SK-N-SH (cell line): ENCODE measurements at regions of chr1 and their contacts with region 1.

Region 1: DNA sequence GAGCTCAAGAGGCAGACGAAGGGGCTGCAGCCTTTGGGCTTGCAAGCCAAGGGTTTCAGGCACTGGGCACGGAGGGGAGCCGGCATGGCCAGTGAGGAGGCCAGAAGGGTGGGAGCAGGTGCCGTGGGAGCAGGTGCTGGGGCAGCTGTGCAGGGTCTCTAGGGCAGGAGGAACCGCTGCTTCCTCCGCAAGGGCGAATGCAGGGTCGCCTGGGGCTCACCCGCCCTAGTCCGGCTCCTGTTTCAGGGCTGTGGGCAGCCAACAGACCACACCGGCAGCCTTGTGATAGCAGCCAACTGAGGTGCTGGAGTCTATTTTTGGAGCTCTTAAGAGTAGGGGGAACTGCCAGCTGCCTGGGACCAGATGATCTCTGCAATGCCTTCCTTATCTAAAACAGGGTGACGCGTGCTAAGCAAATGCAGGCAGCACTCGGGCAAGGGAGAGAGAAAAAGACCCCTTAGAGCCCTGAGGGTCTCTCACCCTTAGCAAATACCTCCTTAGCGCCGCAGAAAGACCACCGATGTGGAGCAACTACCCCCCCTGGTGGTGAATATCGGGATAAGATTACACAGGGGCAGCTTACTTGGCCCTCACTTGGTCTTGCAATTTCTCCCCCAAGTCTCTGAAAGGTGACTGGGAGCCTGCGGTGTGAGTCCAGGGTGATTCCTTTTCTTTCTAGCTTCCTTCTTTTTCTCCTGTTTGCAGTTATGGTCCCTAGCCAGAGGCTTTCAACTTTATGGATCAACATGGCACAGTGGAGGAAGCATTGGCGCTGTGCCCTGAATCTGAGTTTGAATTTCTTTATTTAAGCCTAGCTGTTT is 20.7 kb upstream of the MAPKAPK2 start:
- DNase-seq: peak; percentile 84
- H3K4me3 ChIP-seq: peak overlapping the region; percentile 8 to 39; a peak in 2 of 4 replicates
- H3K27ac ChIP-seq: no peak overlapping the region
- H3K4me1 ChIP-seq: peaks cover 0 to 6% of the 10 kb centered on the region in 2 experiments; a peak in 1 of 4 replicates
- H3K27me3 ChIP-seq: peaks cover 23% of the 10 kb centered on the region; the same call in 1 of the 2 replicates
- CTCF ChIP-seq: peak; percentile 89
- EP300 ChIP-seq: no peak
- RAD21 ChIP-seq: peak; percentile 89

Region 2: GRCh38 chr1:206479183-206480125 is 184.6 kb before region 1 on chr1:
- CTCF ChIA-PET with region 1: interaction called, 26 read pairs
- POLR2A ChIA-PET with region 1: no interaction called
- DNase-seq: peak; percentile 89
- H3K4me3 ChIP-seq: no peak overlapping the region
- H3K27ac ChIP-seq: no peak overlapping the region
- H3K4me1 ChIP-seq: peaks cover 12% of the 10 kb centered on the region in 2 experiments; a peak in 3 of 4 replicates
- H3K27me3 ChIP-seq: no peaks in the 10 kb centered on the region
- CTCF ChIP-seq: peak; percentile 80
- EP300 ChIP-seq: no peak
- RAD21 ChIP-seq: peak; percentile 85

Region 3: GRCh38 chr1:206612129-206612876 is 51.7 kb before region 1 on chr1 and contains the start of gene EIF2D:
- CTCF ChIA-PET with region 1: interaction called, 109 read pairs
- POLR2A ChIA-PET with region 1: interaction called, 3 read pairs
- DNase-seq: peak; percentile 100
- H3K4me3 ChIP-seq: peak within 1 kb of the TSS; percentile 81 to 94
- H3K27ac ChIP-seq: peak within 1 kb of the TSS; percentile 83 to 90
- H3K4me1 ChIP-seq: peaks cover 0 to 8% of the 10 kb centered on the region in 2 experiments; a peak in 2 of 4 replicates
- H3K27me3 ChIP-seq: no peaks in the 10 kb centered on the region
- CTCF ChIP-seq: peak; percentile 77
- EP300 ChIP-seq: peak in 1 of 2 experiments; percentile 44; a peak in 1 of 4 replicates
- RAD21 ChIP-seq: no peak
- polyA plus RNA-seq, gene EIF2D: 59.5 and 83.2 TPM in 2 replicates

Region 4: DNA sequence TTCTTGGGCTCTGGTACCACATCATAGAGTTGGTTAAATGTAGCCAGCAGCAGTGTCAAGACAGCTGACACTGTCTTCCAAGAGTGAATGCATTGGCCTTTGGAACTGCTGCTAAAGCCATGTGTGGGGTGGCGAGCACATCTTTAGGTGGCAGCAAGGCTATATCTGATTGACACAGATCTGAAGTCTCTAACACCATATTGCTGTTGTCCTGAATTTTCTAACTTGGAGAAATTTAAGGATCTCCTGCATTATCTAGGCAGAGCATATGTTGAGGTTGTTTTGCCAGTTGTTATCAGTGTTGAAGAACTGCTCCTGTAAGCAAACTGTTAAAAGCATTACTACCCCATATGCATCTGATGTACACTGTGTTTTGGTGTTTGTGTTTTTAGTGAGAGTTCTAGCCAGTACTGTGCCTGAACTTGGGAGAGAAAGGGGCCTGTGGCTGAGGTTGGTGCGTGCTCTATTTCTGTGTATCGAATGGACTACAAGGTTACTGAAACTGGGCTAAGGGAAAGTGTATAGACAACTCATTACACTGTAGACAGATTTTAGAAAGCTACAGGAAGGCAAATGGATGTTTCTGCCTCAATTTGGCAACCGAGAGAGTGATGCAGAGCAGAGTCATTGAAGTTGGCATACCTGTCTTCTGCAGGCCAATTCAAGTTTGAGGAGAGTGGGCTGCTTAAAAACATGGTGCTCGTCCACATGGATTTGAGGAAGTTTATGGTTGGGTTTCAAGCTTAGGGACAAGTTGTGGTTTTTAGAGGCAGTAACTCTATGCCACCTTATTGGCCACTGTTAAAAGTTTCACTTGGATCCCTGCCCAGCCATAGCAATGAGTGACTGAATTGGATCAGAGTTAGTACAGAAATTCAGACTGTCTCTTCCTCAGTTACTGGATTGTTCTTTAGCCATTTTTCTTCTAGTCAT is 11.8 kb before region 1 on chr1:
- CTCF ChIA-PET with region 1: interaction called, 46 read pairs
- POLR2A ChIA-PET with region 1: no interaction called
- DNase-seq: no peak
- H3K4me3 ChIP-seq: no peak overlapping the region
- H3K27ac ChIP-seq: no peak overlapping the region
- H3K4me1 ChIP-seq: peaks cover 0 to 11% of the 10 kb centered on the region in 2 experiments; a peak in 1 of 4 replicates
- H3K27me3 ChIP-seq: no peaks in the 10 kb centered on the region
- CTCF ChIP-seq: no peak
- EP300 ChIP-seq: no peak
- RAD21 ChIP-seq: no peak

Region 5: DNA sequence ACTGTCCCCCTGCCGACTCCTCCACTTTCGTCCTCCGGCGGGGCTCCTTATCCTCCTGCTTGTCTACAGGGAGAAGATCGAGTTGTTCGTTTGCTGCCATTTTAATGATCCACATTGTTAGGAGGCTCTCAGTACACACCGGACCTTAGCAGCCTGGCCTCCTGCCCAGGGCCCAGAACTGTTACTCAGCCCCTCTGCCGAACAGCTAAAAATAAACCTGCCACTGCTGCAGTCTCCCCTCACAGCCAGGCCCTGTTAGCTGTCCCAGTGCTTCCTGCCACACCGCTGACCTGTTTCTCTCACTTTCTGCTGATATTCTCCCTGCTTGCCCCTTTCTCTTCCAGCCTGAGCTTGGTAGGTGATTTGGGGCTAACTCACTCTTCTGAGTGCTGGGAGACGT is 29.0 kb after region 1 on chr1:
- CTCF ChIA-PET with region 1: interaction called, 13 read pairs
- POLR2A ChIA-PET with region 1: no interaction called
- DNase-seq: no peak
- H3K4me3 ChIP-seq: no peak overlapping the region
- H3K27ac ChIP-seq: peak overlapping the region; percentile 45 to 69
- H3K4me1 ChIP-seq: peaks cover 43 to 51% of the 10 kb centered on the region in 2 experiments
- H3K27me3 ChIP-seq: no peaks in the 10 kb centered on the region
- CTCF ChIP-seq: no peak
- EP300 ChIP-seq: no peak
- RAD21 ChIP-seq: no peak